Colonic mucosa (tissue), 4 donors: ENCODE measurements at regions of chr2 and their contacts with region 1.

Region 1: GRCh38 chr2:238352361-238352760 is 32.0 kb downstream of the TRAF3IP1 start:
- DNase-seq: no peak
- H3K4me3 ChIP-seq: no peak overlapping the region
- H3K27ac ChIP-seq: no peak overlapping the region
- H3K4me1 ChIP-seq: no peaks in the 10 kb centered on the region
- H3K27me3 ChIP-seq: no peaks in the 10 kb centered on the region
- CTCF ChIP-seq: no peak

Region 2: DNA sequence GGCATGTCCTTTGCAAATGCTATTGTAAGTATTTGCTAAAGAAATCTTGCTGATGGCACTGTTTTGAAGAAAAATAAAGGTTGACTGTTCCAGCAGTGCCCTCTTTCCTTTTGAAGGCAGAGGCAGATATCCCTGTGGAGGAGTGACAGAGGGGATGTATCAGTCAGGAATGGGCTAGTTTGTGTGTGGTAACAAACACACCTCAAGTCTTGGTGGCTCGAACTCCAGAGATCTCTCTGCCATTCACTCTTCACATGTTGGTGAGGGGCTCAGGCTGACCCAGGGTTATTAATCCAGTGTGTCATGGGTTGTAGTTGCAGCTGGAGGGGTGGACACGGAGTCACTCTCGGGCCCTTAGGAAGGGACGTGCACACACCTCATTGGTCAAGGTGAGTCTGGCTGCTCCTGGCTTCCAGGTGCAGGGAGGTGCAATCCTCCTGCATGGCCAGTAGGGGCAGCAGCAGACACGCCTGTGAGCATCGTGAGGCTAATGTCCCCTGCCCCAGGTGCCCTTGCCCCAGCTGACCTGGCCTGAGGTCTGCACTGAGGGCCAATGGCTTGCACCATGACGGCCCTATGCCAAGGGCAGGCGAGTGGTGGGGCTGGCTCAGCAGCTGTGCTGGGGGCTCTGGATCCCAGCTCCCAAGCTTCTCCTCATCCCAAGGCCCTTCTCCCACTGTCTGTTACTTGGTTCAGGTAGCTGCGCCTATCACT is 220.9 kb after region 1 on chr2:
- intact Hi-C with region 1: loop called (anchors 10 kb)
- DNase-seq: no peak
- H3K4me3 ChIP-seq: no peak overlapping the region
- H3K27ac ChIP-seq: no peak overlapping the region
- H3K4me1 ChIP-seq: no peaks in the 10 kb centered on the region
- H3K27me3 ChIP-seq: no peaks in the 10 kb centered on the region
- CTCF ChIP-seq: peak; percentile 49

Region 3: DNA sequence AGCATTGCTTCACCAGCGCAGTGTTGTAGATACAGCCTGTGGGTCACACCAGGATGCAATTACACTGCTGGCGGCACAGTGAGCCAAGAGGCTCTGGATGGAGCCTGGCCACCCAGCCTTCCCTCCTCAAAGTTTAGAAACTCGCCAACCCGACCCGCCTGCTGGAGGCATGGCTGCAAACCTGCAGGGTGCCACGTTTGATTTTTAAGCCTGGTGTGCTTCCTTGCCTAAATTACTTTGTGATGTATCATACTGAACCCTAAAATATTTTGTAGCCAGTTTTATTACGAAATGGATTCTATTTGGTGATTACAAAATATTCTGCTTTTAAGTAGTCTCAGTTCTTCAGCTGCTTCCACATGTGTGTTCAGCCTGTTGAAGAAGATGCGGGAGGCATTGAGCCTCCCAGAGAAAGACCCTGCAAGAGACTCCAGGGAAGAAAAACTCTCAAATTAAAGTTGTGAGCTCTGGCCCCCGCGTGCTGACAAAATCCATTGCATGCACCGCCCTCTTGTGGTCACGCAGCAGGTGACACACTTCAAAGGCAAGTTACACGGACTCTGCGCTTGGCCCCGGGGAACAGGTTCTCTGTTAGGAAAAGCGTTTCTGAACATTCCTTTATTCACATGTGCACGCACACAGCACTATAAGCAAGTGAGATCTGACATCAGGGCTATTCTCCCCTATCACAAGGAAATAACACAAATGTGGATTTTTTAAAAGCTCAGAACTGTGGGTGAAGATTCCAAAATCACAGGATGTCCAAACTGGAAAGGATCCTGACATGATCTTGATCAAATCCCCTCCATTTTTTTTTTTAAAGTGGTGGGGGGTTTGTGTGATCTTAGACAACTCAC is 432.5 kb after region 1 on chr2:
- intact Hi-C with region 1: loop called (anchors 10 kb)
- DNase-seq: peak; percentile 56
- H3K4me3 ChIP-seq: no peak overlapping the region
- H3K27ac ChIP-seq: no peak overlapping the region
- H3K4me1 ChIP-seq: no peaks in the 10 kb centered on the region
- H3K27me3 ChIP-seq: no peaks in the 10 kb centered on the region
- CTCF ChIP-seq: peak; percentile 90